Transverse colon (tissue), 4 donors: ENCODE measurements at regions of chr1 and their contacts with region 1.

Region 1: DNA sequence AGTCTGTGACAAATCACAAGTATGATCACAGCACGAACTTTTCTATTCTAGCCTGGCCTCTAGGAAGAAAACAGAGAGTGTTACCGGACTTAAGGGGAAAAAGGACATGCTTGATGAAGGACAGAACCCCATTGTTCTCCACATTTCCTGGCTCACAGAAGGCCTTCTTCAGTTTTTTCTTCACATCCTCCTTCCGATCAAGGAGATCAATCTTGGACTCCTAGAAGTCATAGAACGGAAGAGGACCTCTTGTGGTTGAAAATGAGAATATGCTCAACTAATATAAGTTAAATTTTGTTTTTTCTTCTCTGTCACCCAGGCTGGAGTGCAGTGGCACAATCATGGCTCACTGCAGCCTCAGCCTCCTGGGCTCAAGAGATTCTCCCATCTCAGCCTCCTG is 30.3 kb downstream of the YARS1 start:
- DNase-seq: no peak
- H3K4me3 ChIP-seq: no peak overlapping the region
- H3K27ac ChIP-seq: no peak overlapping the region
- H3K4me1 ChIP-seq: peaks cover 0 to 9% (median 2%) of the 10 kb centered on the region in 4 donors
- H3K27me3 ChIP-seq: no peaks in the 10 kb centered on the region
- CTCF ChIP-seq: peak in 4 of 5 experiments; percentile 32 to 39 (median 34)
- EP300 ChIP-seq: no peak
- POLR2A ChIP-seq: no peak

Region 2: DNA sequence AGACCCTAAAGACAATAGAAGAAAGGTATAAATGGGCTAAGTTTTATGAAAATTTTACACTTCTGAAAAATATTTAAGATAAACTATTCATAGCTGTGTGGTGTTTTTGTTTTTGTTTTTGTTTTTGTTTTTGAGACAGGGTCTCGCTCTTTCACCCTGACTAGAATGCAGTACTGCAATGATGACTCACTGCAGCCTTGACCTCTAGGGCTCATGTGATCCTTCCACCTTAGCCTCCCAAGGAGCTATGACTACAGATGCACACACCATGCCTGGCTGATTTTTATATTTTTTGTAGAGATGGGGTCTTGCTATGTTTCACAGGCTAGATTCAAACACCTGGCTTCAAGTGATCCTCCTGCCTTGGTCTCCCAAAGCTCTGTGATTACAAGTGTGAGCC is 1788.0 kb before region 1 on chr1:
- in situ Hi-C with region 1: no loop called
- intact Hi-C with region 1: no loop called
- DNase-seq: no peak
- H3K4me3 ChIP-seq: no peak overlapping the region
- H3K27ac ChIP-seq: no peak overlapping the region
- H3K4me1 ChIP-seq: peaks cover 0 to 11% (median 0%) of the 10 kb centered on the region in 4 donors
- H3K27me3 ChIP-seq: no peaks in the 10 kb centered on the region
- CTCF ChIP-seq: no peak
- EP300 ChIP-seq: no peak
- POLR2A ChIP-seq: no peak

Region 3: GRCh38 chr1:32500387-32501209 is 286.3 kb before region 1 on chr1:
- in situ Hi-C with region 1: loop called in 1 of 4 experiments (anchors 25 kb)
- intact Hi-C with region 1: no loop called
- DNase-seq: peak; percentile 72
- H3K4me3 ChIP-seq: peak overlapping the region; percentile 71 to 92 (median 88)
- H3K27ac ChIP-seq: peak overlapping the region; percentile 96 to 97 (median 96)
- H3K4me1 ChIP-seq: peaks cover 0 to 11% (median 3%) of the 10 kb centered on the region in 4 donors
- H3K27me3 ChIP-seq: no peaks in the 10 kb centered on the region
- CTCF ChIP-seq: peak in 1 of 5 experiments; percentile 14
- EP300 ChIP-seq: no peak
- POLR2A ChIP-seq: no peak

Region 4: DNA sequence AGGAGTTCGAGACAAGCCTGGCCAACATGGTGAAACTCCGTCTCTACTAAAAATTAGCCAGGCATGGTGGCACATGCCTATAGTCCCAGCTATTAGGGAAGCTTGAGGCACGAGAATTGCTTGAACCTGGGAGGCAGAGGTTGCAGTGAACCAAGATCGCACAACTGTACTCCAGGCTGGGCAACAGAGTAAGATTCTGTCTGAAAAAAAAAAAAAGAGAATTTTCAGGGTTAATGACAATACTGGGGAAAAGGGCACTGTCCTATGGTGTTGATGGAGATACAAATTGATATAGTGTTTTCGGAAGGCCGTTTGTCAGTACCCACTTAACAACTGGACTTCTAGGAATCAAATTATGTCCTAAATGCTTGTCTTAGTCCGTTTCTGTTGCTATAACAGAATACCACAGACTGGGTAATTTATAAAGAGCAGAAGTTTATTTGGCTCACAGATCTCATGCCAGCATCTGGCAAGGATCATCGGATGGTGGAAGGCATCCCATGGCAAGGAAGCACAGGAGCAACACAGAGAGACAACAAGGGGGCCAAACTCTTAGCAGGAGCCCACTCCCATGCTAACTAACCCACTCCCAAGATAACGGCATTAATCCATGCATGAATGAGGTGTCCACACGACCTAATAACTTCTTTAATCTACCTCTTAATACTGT is 206.4 kb before region 1 on chr1:
- in situ Hi-C with region 1: no loop called
- intact Hi-C with region 1: no loop called
- DNase-seq: no peak
- H3K4me3 ChIP-seq: no peak overlapping the region
- H3K27ac ChIP-seq: no peak overlapping the region
- H3K4me1 ChIP-seq: no peaks in the 10 kb centered on the region
- H3K27me3 ChIP-seq: no peaks in the 10 kb centered on the region
- CTCF ChIP-seq: no peak
- EP300 ChIP-seq: no peak
- POLR2A ChIP-seq: no peak